PC-9 (cell line): ENCODE measurements at regions of chr14 and their contacts with region 1.

Region 1: DNA sequence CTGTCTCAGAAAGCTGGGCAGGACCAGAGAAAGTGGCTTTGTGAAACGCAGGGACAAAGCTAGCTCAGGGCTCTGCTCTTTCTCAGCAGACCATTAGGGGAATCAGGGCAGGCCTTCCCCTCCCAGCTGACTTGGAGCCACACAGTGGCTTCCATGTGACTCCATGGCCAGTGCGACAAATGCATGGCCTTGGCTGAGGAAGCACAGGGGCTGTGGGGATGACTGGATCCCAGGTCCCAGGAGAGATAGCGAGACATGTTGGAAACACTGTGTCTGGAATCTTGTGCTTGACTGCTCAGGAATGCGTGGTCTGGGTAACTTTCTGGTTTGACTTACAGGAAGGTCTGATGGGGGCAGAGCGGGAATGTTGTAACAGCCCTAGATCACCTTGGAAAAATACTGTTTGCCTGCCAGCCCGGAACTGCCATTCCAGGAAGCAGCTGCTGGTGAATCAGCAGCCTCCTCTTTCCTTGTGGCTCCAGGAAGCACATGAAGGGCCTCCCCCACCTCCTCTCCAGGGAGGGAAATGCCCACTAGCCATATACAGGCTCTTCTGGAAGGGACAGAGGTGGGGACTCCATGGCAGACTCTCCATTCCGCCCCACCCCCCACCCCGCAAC is 133.5 kb upstream of the HIF1A start:
- DNase-seq: peak; percentile 91 to 100
- H3K4me3 ChIP-seq: peak overlapping the region; percentile 30; the same call in 1 of the 2 replicates
- H3K27ac ChIP-seq: peak overlapping the region; percentile 98
- H3K4me1 ChIP-seq: peaks cover 79% of the 10 kb centered on the region
- H3K27me3 ChIP-seq: no peaks in the 10 kb centered on the region
- CTCF ChIP-seq: no peak; the same call in 1 of the 2 replicates

Region 2: GRCh38 chr14:61512026-61512834 is 49.5 kb before region 1 on chr14:
- CTCF ChIA-PET with region 1: no interaction called
- POLR2A ChIA-PET with region 1: no interaction called
- intact Hi-C with region 1: loop called (anchors 1 kb)
- DNase-seq: peak in 1 of 2 experiments; percentile 24
- H3K4me3 ChIP-seq: no peak overlapping the region
- H3K27ac ChIP-seq: peak overlapping the region; percentile 30
- H3K4me1 ChIP-seq: peaks cover 54% of the 10 kb centered on the region
- H3K27me3 ChIP-seq: no peaks in the 10 kb centered on the region
- CTCF ChIP-seq: no peak

Region 3: DNA sequence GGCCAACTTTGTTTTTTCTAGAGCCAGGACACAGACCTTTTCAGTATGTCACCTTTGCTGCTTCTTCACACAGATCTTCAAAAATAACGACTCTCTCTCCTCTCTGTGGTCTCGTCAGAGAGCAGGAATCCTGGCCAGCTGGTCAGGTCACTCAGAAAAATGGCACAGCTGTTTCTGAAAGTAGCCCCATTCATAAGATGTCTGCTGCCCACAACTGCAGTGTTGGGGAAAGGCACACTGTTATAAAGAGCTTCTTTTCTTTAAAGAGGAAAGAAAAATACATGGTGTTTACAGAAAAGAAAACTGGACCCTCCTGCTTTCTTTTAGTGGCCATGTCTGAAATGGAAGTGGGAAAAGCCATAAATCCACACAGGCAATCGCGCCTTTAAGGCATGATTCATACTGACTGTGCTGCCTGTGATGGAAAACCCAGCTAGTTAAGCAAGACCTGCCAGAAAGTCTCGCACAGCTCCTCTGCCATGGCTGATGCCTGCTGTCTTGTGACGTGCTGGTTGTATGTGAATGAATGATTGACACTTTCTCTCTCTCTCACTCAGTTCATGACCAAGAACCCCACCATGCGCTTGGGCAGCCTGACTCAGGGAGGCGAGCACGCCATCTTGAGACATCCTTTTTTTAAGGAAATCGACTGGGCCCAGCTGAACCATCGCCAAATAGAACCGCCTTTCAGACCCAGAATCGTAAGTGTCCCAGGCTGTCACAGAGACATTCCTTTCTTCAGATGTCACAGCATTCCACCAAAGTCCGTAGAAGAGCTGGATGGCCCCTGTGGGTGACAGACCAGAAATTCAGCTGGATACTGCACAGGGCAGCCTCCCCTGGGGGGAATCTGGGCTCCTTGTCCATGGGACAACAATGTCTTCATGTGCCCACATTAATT is 14.3 kb before region 1 on chr14:
- CTCF ChIA-PET with region 1: interaction called, 3 read pairs
- POLR2A ChIA-PET with region 1: interaction called, 3 read pairs
- intact Hi-C with region 1: loop called (anchors 1 kb)
- DNase-seq: peak; percentile 67 to 85
- H3K4me3 ChIP-seq: no peak overlapping the region
- H3K27ac ChIP-seq: peak overlapping the region; percentile 85
- H3K4me1 ChIP-seq: peaks cover 37% of the 10 kb centered on the region
- H3K27me3 ChIP-seq: no peaks in the 10 kb centered on the region
- CTCF ChIP-seq: no peak

Region 4: DNA sequence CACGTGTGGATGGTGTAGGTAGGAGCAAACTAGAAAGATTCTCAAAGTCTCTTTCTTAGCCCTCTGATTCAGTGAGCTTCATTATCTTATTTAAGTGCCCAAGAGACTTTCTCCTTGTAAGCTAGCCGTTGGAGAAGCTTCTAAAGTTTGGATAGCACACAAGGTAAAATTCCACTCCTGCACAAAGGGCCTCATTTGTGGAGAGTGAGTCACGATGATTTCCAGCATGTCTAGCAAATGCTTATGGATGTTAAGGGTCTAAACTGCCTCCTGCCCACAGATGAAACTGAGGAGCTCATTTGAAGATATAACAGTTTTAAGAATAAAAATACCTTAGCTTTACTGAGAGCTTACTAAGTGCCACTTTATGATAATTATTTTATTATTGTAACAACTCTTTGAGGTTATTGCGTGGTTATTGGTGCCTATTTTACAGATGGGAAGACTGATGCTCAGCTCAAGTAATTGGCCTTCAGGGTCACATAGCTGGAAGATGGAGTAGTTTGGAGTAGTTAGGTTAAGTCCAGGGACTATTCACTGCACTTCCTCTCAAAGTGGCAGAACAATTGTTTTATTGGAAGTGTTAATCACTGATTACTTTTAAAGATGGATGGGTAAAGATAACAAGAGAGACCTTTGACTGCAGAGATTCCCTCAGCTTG is 54.9 kb after region 1 on chr14:
- CTCF ChIA-PET with region 1: interaction called, 4 read pairs
- POLR2A ChIA-PET with region 1: interaction called, 4 read pairs
- intact Hi-C with region 1: loop called (anchors 2 kb)
- DNase-seq: peak in 1 of 2 experiments; percentile 83
- H3K4me3 ChIP-seq: no peak overlapping the region
- H3K27ac ChIP-seq: peak overlapping the region; percentile 74
- H3K4me1 ChIP-seq: peaks cover 37% of the 10 kb centered on the region
- H3K27me3 ChIP-seq: no peaks in the 10 kb centered on the region
- CTCF ChIP-seq: no peak

Region 5: DNA sequence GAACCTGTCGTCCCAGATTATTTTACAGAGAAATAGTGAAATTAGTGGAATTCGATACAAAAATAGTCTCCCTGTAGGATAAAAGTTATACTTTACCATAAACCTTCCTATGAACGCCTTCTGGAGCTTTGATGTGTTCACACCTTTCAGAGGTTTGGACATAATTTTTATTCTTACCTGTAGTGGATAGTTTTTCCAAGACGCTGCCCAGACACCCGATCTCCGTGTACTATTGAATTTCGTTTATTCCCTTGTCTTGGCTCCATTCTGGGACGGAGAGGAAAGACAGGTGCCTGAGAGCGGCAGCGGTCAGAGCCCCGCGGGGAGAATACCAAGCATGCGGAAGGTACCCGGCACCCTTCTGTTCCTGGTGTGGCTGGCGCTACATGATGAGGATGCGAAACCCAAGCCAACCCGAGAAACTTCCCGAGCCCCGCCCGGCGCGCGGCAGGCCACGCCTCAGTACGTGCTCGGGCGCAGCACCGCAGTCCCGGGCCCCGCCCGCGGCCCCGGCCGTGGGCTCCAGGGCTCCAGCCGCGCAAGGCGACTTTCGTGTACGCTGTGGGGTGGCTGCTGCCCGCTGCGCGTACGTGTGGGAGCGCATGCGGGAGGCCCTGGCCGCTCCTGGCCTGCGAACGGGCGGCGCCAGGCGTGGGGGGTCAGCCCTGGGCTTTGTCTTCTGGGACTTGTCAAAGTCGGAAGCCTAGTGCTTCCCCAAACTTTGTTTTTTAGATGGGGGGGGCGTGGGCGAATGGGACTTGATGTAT is 189.1 kb after region 1 on chr14:
- CTCF ChIA-PET with region 1: interaction called, 3 read pairs
- POLR2A ChIA-PET with region 1: interaction called, 10 read pairs
- intact Hi-C with region 1: loop called (anchors 1 kb)
- DNase-seq: peak; percentile 93 to 95
- H3K4me3 ChIP-seq: peak overlapping the region; percentile 67
- H3K27ac ChIP-seq: peak overlapping the region; percentile 89
- H3K4me1 ChIP-seq: peaks cover 88% of the 10 kb centered on the region
- H3K27me3 ChIP-seq: no peaks in the 10 kb centered on the region
- CTCF ChIP-seq: no peak